ENCODE measurements at regions of chr4 and their contacts with region 1.

Region 1: DNA sequence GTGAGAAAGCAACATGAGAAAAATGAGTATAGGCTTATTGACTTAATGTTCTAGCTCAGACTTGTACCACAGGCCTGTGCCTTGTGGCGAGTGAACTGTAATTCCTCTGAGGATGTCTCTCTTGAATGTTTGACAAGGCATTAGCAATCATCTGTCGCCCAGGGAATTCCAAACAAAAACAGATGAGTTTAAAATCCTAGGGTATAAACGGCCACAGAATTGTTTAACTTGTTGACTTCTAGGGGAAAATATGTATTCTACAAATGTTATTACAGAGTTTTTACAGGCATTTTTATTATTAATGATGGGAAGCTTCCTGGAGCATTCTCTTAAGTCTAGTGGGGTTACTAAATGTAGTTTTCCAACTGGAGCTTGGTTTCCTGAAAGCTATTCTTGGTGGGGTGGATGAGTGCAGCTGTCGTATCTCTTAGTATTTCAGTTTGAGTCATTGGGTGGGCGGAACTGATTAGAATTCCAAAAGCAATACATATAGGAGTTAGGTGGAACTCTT is 40.6 kb downstream of the ARHGAP10 start:
- DNase-seq: no peak
- ATAC-seq: no peak
- H3K4me3 ChIP-seq: no peak overlapping the region
- H3K4me3 Mint-ChIP-seq: no peak overlapping the region
- H3K27ac ChIP-seq: no peak overlapping the region
- H3K27ac Mint-ChIP-seq: no peak overlapping the region
- H3K4me1 ChIP-seq: no peaks in the 10 kb centered on the region
- H3K4me1 Mint-ChIP-seq: no peaks in the 10 kb centered on the region
- H3K27me3 ChIP-seq: no peaks in the 10 kb centered on the region
- H3K27me3 Mint-ChIP-seq: no peaks in the 10 kb centered on the region
- CTCF ChIP-seq: no peak

Region 2: GRCh38 chr4:147198411-147199051 is 574.0 kb before region 1 on chr4:
- CTCF ChIA-PET with region 1: no interaction called
- POLR2A ChIA-PET with region 1: no interaction called
- intact Hi-C with region 1: no loop called
- DNase-seq: no peak
- ATAC-seq: no peak
- H3K4me3 ChIP-seq: no peak overlapping the region
- H3K4me3 Mint-ChIP-seq: no peak overlapping the region
- H3K27ac ChIP-seq: no peak overlapping the region
- H3K27ac Mint-ChIP-seq: no peak overlapping the region
- H3K4me1 ChIP-seq: no peaks in the 10 kb centered on the region
- H3K4me1 Mint-ChIP-seq: no peaks in the 10 kb centered on the region
- H3K27me3 ChIP-seq: peaks cover 0 to 4% of the 10 kb centered on the region in 2 experiments
- H3K27me3 Mint-ChIP-seq: peaks cover 2% of the 10 kb centered on the region
- CTCF ChIP-seq: no peak

Region 3: DNA sequence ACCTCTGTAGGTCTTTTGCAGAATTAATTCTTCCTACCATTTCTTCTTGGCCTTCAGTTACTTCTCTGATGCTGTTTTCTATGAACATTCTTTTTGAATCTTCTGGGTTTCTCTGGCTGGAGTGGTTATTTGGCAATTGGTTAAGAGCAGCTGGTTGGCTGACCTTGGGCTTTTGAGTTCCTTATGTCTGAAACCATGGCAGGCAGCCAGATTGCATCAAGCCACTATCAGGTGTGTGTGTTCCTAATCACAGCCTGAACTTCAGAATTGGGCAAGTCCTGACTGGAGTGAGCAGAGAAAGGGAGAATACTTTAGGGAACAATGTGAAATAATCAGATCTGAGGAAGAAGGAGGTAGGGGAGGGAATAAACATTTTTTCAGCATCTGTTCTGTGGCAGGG is 49.6 kb after region 1 on chr4:
- CTCF ChIA-PET with region 1: no interaction called
- POLR2A ChIA-PET with region 1: no interaction called
- intact Hi-C with region 1: loop called in 1 of 2 experiments (anchors 5 kb)
- DNase-seq: no peak
- ATAC-seq: no peak
- H3K4me3 ChIP-seq: no peak overlapping the region
- H3K4me3 Mint-ChIP-seq: no peak overlapping the region
- H3K27ac ChIP-seq: no peak overlapping the region
- H3K27ac Mint-ChIP-seq: no peak overlapping the region
- H3K4me1 ChIP-seq: no peaks in the 10 kb centered on the region
- H3K4me1 Mint-ChIP-seq: no peaks in the 10 kb centered on the region
- H3K27me3 ChIP-seq: no peaks in the 10 kb centered on the region
- H3K27me3 Mint-ChIP-seq: no peaks in the 10 kb centered on the region
- CTCF ChIP-seq: no peak

Region 4: DNA sequence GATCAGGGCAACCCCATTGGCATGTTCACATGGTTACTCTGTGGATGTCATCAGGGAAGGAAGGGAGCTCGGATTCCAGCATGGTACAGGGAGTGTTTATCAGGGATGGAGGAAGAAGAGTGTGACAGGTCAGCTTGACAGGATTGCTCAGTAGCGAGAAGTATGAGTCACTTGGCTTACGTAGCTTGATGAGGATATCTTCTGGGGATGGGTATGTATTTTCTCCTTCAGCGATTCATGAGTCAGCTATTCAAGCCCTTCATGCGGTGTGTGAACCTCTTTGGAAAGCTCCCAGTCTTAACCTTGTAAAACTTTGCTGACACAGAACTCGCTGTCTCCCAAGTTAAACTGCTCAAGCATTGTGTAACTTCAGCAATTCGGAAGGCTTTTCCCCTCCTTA is 234.8 kb after region 1 on chr4:
- CTCF ChIA-PET with region 1: no interaction called
- POLR2A ChIA-PET with region 1: no interaction called
- intact Hi-C with region 1: no loop called
- DNase-seq: peak in 1 of 9 experiments; percentile 16
- ATAC-seq: no peak
- H3K4me3 ChIP-seq: no peak overlapping the region
- H3K4me3 Mint-ChIP-seq: no peak overlapping the region
- H3K27ac ChIP-seq: no peak overlapping the region
- H3K27ac Mint-ChIP-seq: no peak overlapping the region
- H3K4me1 ChIP-seq: no peaks in the 10 kb centered on the region
- H3K4me1 Mint-ChIP-seq: peaks cover 11% of the 10 kb centered on the region
- H3K27me3 ChIP-seq: no peaks in the 10 kb centered on the region
- H3K27me3 Mint-ChIP-seq: no peaks in the 10 kb centered on the region
- CTCF ChIP-seq: no peak

Measured in CD8-positive, alpha-beta T cell (primary cell).